Thyroid gland (tissue), 4 donors: ENCODE measurements at regions of chr10 and their contacts with region 1.

Region 1: GRCh38 chr10:76036111-76036940 is 604.9 kb downstream of the LRMDA start:
- DNase-seq: peak; percentile 69 to 76
- H3K4me3 ChIP-seq: no peak overlapping the region
- H3K27ac ChIP-seq: no peak overlapping the region
- H3K4me1 ChIP-seq: no peaks in the 10 kb centered on the region
- H3K27me3 ChIP-seq: no peaks in the 10 kb centered on the region
- CTCF ChIP-seq: peak; percentile 76 to 96 (median 82)
- POLR2A ChIP-seq: no peak

Region 2: DNA sequence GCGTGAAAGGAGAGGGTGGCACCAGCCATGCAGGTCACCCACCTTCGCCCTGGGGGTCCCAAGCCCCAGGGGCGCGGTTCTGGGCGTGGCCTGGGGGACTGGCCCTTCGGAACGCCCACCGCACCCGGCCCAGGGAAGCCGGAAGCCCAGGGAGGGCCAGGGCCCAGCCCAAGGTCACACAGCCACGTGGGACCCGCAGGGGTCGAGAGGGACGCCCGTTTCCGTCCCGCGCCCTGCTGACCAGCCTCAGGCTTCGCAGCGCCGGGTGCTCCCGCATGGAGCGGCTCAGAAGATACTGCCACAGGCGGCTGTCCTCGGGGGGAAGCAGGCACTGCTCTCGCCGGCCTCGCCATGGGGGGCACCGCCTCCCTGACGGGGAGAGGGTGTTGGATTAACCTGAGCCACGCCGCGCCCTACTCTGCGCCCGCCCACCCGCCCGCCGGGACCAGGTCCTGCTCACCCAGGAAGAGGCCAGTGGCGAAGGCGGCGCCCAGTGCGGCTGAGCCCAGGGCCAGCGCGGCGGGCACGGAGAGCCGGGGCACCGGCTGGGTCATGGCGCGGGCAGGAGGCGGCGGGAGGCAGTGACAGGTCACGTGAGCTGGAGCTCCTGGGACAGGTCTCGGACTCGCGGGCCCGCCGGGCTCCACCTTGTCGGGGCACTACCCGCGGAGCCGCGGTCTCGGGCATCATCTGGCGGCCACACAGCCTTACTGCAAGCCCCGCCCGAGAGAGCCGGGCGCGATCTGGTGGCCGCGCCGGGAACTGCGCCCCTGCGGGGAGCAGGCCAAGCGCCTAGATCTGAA is 800.8 kb before region 1 on chr10 and contains the start of gene COMTD1:
- intact Hi-C with region 1: no loop called
- DNase-seq: peak; percentile 97 to 98
- H3K4me3 ChIP-seq: peak within 1 kb of the TSS; percentile 62 to 86 (median 73)
- H3K27ac ChIP-seq: peak within 1 kb of the TSS; percentile 68 to 74 (median 72)
- H3K4me1 ChIP-seq: peaks cover 7 to 10% of the 10 kb centered on the region in 2 donors
- H3K27me3 ChIP-seq: no peaks in the 10 kb centered on the region
- CTCF ChIP-seq: peak; percentile 100
- POLR2A ChIP-seq: peak in 1 of 2 donors; percentile 43
- total RNA-seq, gene COMTD1: 43.4 to 74.0 (median 68.7) TPM

Region 3: DNA sequence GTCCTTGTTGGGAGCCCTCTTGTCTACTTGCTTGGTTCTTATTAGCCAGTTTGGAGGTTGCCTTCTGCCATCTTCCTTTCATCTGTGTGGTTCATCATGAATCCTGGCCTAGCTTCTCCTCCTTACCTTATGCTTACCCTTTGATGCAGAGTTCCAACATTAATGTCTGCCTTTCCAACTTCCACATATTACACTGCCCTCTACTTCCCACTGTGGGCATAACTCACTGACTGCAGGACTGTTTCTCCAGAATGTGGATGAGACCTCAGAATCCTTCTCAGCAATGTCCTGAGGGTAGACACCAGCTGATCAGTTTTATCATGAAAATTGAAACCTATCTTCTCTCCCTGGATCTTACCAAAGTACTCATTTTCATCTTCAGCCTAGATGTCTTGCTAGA is 113.9 kb before region 1 on chr10:
- intact Hi-C with region 1: loop called (anchors 10 kb)
- DNase-seq: no peak
- H3K4me3 ChIP-seq: no peak overlapping the region
- H3K27ac ChIP-seq: no peak overlapping the region
- H3K4me1 ChIP-seq: no peaks in the 10 kb centered on the region
- H3K27me3 ChIP-seq: no peaks in the 10 kb centered on the region
- CTCF ChIP-seq: peak in 3 of 6 experiments; percentile 17 to 34 (median 34)
- POLR2A ChIP-seq: no peak